Vagina (tissue), 2 donors: ENCODE measurements at regions of chr10 and their contacts with region 1.

Region 1: DNA sequence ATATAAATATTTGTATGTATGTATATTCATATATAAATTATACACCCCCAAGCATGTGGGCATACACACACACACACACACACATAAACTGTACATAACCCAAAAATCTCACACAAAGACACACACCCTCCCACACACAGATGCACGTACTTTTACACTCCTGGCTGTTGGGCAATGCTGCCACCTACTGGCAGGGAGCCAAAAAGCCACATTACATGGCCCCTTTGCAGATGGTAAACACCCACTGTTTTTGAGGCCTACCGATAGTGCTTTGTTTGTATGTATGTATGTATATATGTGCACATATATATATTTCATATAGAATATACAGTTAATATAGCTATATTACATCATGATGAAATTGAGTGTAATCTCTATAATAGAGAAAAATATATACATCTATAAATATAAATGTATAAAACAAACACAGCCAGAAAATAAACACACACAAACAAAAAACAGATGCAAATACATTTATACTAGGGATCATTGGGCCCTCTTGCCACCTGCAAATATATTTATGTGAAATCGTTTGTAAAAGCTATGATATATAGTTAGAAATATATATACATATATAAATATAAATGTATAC is 120.1 kb upstream of the ACBD5 start:
- DNase-seq: no peak
- H3K4me3 ChIP-seq: no peak overlapping the region
- H3K27ac ChIP-seq: no peak overlapping the region
- H3K4me1 ChIP-seq: no peaks in the 10 kb centered on the region
- H3K27me3 ChIP-seq: no peaks in the 10 kb centered on the region
- CTCF ChIP-seq: peak in 2 of 3 experiments; percentile 22 to 45
- POLR2A ChIP-seq: no peak

Region 2: DNA sequence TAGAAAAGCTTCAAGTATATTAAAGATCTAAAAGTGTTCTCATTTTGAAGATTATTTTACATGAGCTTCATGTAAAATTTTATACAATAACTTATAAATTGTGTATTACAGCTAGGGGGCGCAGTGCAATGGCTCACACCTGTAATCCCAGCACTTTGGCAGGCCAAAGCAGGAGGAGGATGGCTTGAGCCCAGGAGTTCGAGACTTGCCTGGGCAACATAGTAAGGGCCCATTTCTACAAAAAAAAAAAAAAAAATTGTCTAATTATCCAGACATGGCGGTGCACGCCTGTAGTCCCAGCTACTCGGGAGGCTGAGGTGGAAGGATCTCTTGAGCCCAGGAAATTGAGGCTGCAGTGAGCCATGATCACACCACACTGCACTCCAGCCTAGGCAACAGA is 136.7 kb before region 1 on chr10:
- intact Hi-C with region 1: loop called (anchors 10 kb)
- DNase-seq: no peak
- H3K4me3 ChIP-seq: no peak overlapping the region
- H3K27ac ChIP-seq: no peak overlapping the region
- H3K4me1 ChIP-seq: no peaks in the 10 kb centered on the region
- H3K27me3 ChIP-seq: no peaks in the 10 kb centered on the region
- CTCF ChIP-seq: peak in 1 of 3 experiments; percentile 40
- POLR2A ChIP-seq: no peak

Region 3: GRCh38 chr10:27433976-27434375 is 73.3 kb after region 1 on chr10:
- intact Hi-C with region 1: no loop called
- DNase-seq: no peak
- H3K4me3 ChIP-seq: no peak overlapping the region
- H3K27ac ChIP-seq: no peak overlapping the region
- H3K4me1 ChIP-seq: no peaks in the 10 kb centered on the region
- H3K27me3 ChIP-seq: no peaks in the 10 kb centered on the region
- CTCF ChIP-seq: no peak
- POLR2A ChIP-seq: no peak

Region 4: DNA sequence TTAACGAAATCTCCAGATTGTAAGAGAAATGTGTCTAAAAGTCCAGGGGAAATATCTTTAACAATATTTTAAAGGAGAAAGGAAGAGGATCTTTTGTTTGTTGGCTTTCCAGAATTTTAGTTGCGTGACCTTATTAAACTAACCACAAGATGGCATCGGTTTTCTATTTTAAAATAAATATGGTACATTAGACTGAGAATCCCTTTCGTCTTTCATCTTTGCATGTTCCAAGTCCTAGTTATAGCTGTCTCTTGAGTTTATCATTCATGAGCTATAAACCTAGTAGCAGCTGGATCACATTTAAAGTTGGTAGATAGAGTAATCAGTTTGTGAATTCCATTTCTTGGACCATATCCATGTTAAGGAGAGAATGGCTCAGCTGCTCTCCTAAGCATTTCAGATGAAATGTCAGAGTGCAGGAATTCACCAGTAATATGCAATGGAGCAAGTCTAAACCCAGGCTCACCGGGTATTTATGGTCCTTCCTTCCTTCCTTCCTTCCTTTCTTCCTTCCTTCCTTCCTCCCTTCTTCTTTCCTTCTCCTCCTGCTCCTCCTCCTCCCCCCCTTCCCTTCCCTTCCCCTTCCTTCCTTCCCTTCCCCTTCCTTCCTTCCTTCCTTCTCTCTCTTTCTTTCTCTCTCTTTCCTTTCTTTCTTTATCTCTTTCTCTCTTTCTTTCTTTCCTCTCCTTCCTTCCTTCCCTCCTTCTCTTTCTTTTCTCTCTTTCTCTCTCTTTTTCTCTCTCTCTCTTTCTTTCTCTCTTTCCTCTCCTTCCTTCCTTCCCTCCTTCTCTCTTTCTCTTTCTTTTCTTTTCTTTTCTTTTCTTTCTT is 85.6 kb after region 1 on chr10:
- intact Hi-C with region 1: no loop called
- DNase-seq: no peak
- H3K4me3 ChIP-seq: no peak overlapping the region
- H3K27ac ChIP-seq: no peak overlapping the region
- H3K4me1 ChIP-seq: no peaks in the 10 kb centered on the region
- H3K27me3 ChIP-seq: no peaks in the 10 kb centered on the region
- CTCF ChIP-seq: peak in 1 of 3 experiments; percentile 34
- POLR2A ChIP-seq: no peak

Region 5: DNA sequence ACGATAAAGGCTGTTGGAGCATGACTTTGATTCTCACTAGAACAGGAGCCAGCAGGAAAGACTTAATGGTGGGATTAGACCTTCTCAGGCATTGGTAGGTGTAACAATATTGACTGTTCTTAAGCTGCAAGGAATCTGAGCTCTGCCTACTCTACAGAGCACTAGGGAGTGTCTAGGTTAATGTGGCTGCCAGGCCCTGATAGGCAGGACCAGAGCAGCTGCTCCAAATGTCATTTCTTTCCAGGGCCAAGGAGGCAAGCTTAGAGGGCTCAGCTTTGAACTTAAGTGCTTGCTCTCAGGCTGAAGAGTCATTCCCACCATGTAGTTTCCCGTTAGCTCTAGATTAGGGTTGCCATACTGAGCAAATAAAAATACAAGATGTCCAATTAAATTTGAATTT is 240.3 kb after region 1 on chr10:
- intact Hi-C with region 1: no loop called
- DNase-seq: peak in 1 of 2 donors; percentile 40
- H3K4me3 ChIP-seq: no peak overlapping the region
- H3K27ac ChIP-seq: no peak overlapping the region
- H3K4me1 ChIP-seq: no peaks in the 10 kb centered on the region
- H3K27me3 ChIP-seq: no peaks in the 10 kb centered on the region
- CTCF ChIP-seq: no peak
- POLR2A ChIP-seq: no peak